ENCODE measurements at regions of chr7 and their contacts with region 1.

Region 1: DNA sequence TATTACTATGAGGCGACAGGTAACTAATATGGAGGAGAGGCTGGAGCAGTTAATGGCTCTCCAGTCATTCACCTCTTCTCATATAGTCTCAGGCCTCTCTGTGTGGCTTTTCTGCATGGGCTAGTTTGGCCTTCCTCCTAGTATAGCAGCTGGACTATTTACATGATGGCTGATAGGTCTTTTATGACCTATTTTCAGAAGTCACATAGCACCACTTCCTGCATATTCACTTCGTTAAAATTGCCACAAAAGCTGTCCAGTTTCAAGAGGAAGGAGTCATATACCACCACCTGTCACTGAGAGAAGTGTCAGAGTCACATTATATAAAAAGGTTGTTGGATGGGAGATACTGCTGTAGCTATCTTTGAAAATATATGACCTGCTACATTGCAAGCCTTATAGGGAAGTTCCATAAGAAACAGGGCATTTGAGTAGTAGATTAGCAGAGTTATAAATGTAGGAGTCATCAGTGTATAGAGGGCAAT is 8.0 kb upstream of the DMTF1 start:
- DNase-seq: no peak
- ATAC-seq: no peak
- H3K4me3 ChIP-seq: no peak overlapping the region
- H3K27ac ChIP-seq: no peak overlapping the region
- H3K4me1 ChIP-seq: no peaks in the 10 kb centered on the region
- H3K27me3 ChIP-seq: no peaks in the 10 kb centered on the region

Region 2: GRCh38 chr7:86932038-86932512 is 212.1 kb before region 1 on chr7:
- intact Hi-C with region 1: loop called (anchors 5 kb)
- DNase-seq: peak in 1 of 2 donors; percentile 33
- ATAC-seq: peak; percentile 76
- H3K4me3 ChIP-seq: no peak overlapping the region
- H3K27ac ChIP-seq: no peak overlapping the region
- H3K4me1 ChIP-seq: peaks cover 0 to 3% of the 10 kb centered on the region in 2 donors
- H3K27me3 ChIP-seq: no peaks in the 10 kb centered on the region

Region 3: GRCh38 chr7:86950360-86950759 is 193.9 kb before region 1 on chr7:
- intact Hi-C with region 1: no loop called
- DNase-seq: no peak
- ATAC-seq: no peak
- H3K4me3 ChIP-seq: no peak overlapping the region
- H3K27ac ChIP-seq: no peak overlapping the region
- H3K4me1 ChIP-seq: peaks cover 0 to 3% of the 10 kb centered on the region in 2 donors
- H3K27me3 ChIP-seq: no peaks in the 10 kb centered on the region

Measured in aorta (tissue), 5 donors.